ENCODE measurements at regions of chr2 and their contacts with region 1.

Region 1: GRCh38 chr2:36455011-36455410 is 99.4 kb downstream of the CRIM1 start:
- DNase-seq: no peak
- H3K4me3 ChIP-seq: no peak overlapping the region
- H3K27ac ChIP-seq: no peak overlapping the region
- H3K4me1 ChIP-seq: peaks cover under 1% of the 10 kb centered on the region
- CTCF ChIP-seq: no peak

Region 2: GRCh38 chr2:36507408-36507812 is 52.4 kb after region 1 on chr2:
- CTCF ChIA-PET with region 1: interaction called, 20 read pairs
- POLR2A ChIA-PET with region 1: no interaction called
- intact Hi-C with region 1: no loop called
- DNase-seq: peak; percentile 64
- H3K4me3 ChIP-seq: no peak overlapping the region
- H3K27ac ChIP-seq: no peak overlapping the region
- H3K4me1 ChIP-seq: no peaks in the 10 kb centered on the region
- CTCF ChIP-seq: peak; percentile 95